ENCODE measurements at regions of chr17 and their contacts with region 1.

Region 1: DNA sequence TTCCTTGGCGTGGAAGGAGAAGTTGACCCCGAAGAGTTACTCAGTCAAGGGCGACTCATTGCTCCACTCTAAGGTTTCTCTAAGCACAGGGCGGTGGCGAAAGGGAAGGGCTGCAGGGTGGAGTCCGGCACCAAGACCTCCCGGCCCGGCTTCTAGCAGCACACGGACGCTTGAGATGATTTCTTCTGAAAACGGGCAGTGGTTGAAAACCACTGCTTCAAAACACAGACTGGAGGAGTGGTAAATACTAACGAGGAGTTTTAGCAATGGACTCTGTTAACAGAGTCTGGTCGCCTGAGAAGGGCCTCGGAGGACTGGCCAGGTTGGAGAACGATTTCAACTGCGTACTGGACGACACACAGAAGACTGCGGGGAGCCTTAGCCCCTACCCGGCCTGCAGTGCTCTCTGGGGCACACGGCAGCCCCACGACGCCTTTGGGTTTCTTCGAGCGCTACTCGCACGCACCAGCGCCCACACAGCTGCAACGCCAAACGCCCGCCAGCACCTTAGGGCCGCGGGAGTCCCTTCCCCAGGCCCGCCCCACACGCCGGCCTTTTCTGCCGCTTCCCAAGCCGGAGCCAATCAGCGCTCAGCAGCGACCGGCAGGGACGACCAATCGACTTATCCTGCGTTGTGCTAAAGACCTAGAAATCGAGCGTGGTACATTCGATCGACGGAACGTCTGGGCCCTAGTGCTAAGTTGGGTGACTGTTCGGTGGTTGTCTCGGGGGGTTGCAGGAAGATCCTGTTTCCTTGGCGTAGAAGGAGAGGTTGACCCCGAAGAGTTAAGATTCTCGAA is 14.4 kb upstream of the CA4 start:
- DNase-seq: peak; percentile 97
- H3K4me3 ChIP-seq: peak overlapping the region; percentile 54 to 84
- H3K27ac ChIP-seq: peak overlapping the region in 1 of 2 donors; percentile 3
- H3K4me1 ChIP-seq: peaks cover 10% of the 10 kb centered on the region
- H3K27me3 ChIP-seq: no peaks in the 10 kb centered on the region
- CTCF ChIP-seq: no peak
- POLR2A ChIP-seq: no peak

Region 2: GRCh38 chr17:60435244-60436167 is 300.2 kb after region 1 on chr17:
- intact Hi-C with region 1: loop called (anchors 10 kb)
- DNase-seq: peak; percentile 88
- H3K4me3 ChIP-seq: no peak overlapping the region
- H3K27ac ChIP-seq: no peak overlapping the region
- H3K4me1 ChIP-seq: peaks cover 4% of the 10 kb centered on the region
- H3K27me3 ChIP-seq: no peaks in the 10 kb centered on the region
- CTCF ChIP-seq: peak; percentile 78 to 96 (median 92)
- POLR2A ChIP-seq: no peak

Measured in testis (tissue), 5 donors.